CD8-positive, alpha-beta T cell (primary cell): ENCODE measurements at regions of chr10 and their contacts with region 1.

Region 1: GRCh38 chr10:96017191-96017687 is 26.1 kb upstream of the CCNJ start:
- DNase-seq: peak in 5 of 9 experiments; percentile 13 to 71 (median 36)
- ATAC-seq: peak; percentile 81
- H3K4me3 ChIP-seq: no peak overlapping the region
- H3K4me3 Mint-ChIP-seq: no peak overlapping the region
- H3K27ac ChIP-seq: no peak overlapping the region
- H3K27ac Mint-ChIP-seq: no peak overlapping the region
- H3K4me1 ChIP-seq: no peaks in the 10 kb centered on the region
- H3K4me1 Mint-ChIP-seq: no peaks in the 10 kb centered on the region
- H3K27me3 ChIP-seq: no peaks in the 10 kb centered on the region
- H3K27me3 Mint-ChIP-seq: peaks cover 5% of the 10 kb centered on the region
- CTCF ChIP-seq: peak; percentile 63

Region 2: DNA sequence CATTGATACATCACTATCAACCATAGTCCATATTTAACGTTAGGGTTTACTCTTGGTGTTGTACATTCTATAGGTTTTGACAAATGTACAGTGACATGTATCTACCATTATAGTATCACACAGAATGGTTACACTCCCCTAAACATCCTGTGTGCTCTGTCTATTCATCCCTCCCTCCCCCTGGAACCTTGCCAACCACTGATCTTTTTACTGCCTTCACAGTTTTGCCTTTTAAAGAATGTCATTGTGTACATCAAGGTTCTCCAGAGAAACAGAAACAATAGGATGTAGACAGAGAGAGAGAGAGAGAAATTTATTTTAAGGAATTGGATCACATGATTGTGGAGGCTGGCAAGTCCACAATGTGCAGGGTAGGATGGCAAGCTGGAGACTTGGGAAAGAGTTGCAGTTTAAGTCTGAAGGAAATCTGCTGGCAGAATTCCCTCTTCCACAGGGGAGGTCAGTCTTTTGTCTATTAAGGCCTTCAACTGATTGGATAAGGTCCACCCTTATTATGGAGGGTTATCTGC is 18.9 kb before region 1 on chr10:
- CTCF ChIA-PET with region 1: interaction called, 15 read pairs
- POLR2A ChIA-PET with region 1: no interaction called
- intact Hi-C with region 1: no loop called
- DNase-seq: no peak
- ATAC-seq: no peak
- H3K4me3 ChIP-seq: no peak overlapping the region
- H3K4me3 Mint-ChIP-seq: no peak overlapping the region
- H3K27ac ChIP-seq: no peak overlapping the region
- H3K27ac Mint-ChIP-seq: no peak overlapping the region
- H3K4me1 ChIP-seq: no peaks in the 10 kb centered on the region
- H3K4me1 Mint-ChIP-seq: no peaks in the 10 kb centered on the region
- H3K27me3 ChIP-seq: no peaks in the 10 kb centered on the region
- H3K27me3 Mint-ChIP-seq: no peaks in the 10 kb centered on the region
- CTCF ChIP-seq: no peak

Region 3: GRCh38 chr10:96118604-96119450 is 101.6 kb after region 1 on chr10:
- CTCF ChIA-PET with region 1: no interaction called
- POLR2A ChIA-PET with region 1: no interaction called
- intact Hi-C with region 1: no loop called
- DNase-seq: no peak
- ATAC-seq: no peak
- H3K4me3 ChIP-seq: no peak overlapping the region
- H3K4me3 Mint-ChIP-seq: no peak overlapping the region
- H3K27ac ChIP-seq: no peak overlapping the region
- H3K27ac Mint-ChIP-seq: no peak overlapping the region
- H3K4me1 ChIP-seq: no peaks in the 10 kb centered on the region
- H3K4me1 Mint-ChIP-seq: no peaks in the 10 kb centered on the region
- H3K27me3 ChIP-seq: peaks cover 7 to 17% of the 10 kb centered on the region in 2 experiments
- H3K27me3 Mint-ChIP-seq: peaks cover 60% of the 10 kb centered on the region
- CTCF ChIP-seq: no peak

Region 4: GRCh38 chr10:96292971-96293920 is 276.0 kb after region 1 on chr10:
- CTCF ChIA-PET with region 1: interaction called, 32 read pairs
- POLR2A ChIA-PET with region 1: no interaction called
- intact Hi-C with region 1: loop called (anchors 1 to 5 kb)
- DNase-seq: peak in 4 of 9 experiments; percentile 10 to 51 (median 39)
- ATAC-seq: peak; percentile 54
- H3K4me3 ChIP-seq: no peak overlapping the region
- H3K4me3 Mint-ChIP-seq: no peak overlapping the region
- H3K27ac ChIP-seq: no peak overlapping the region
- H3K27ac Mint-ChIP-seq: no peak overlapping the region
- H3K4me1 ChIP-seq: peaks cover 27% of the 10 kb centered on the region
- H3K4me1 Mint-ChIP-seq: peaks cover 28% of the 10 kb centered on the region
- H3K27me3 ChIP-seq: no peaks in the 10 kb centered on the region
- H3K27me3 Mint-ChIP-seq: peaks cover 5% of the 10 kb centered on the region
- CTCF ChIP-seq: peak; percentile 63

Region 5: GRCh38 chr10:96339957-96340904 is 323.0 kb after region 1 on chr10:
- CTCF ChIA-PET with region 1: interaction called, 55 read pairs
- POLR2A ChIA-PET with region 1: interaction called, 3 read pairs
- intact Hi-C with region 1: loop called (anchors 1 kb)
- DNase-seq: peak; percentile 8 to 73 (median 50)
- ATAC-seq: peak; percentile 72
- H3K4me3 ChIP-seq: no peak overlapping the region
- H3K4me3 Mint-ChIP-seq: no peak overlapping the region
- H3K27ac ChIP-seq: no peak overlapping the region
- H3K27ac Mint-ChIP-seq: no peak overlapping the region
- H3K4me1 ChIP-seq: no peaks in the 10 kb centered on the region
- H3K4me1 Mint-ChIP-seq: no peaks in the 10 kb centered on the region
- H3K27me3 ChIP-seq: no peaks in the 10 kb centered on the region
- H3K27me3 Mint-ChIP-seq: no peaks in the 10 kb centered on the region
- CTCF ChIP-seq: peak; percentile 69

Region 6: DNA sequence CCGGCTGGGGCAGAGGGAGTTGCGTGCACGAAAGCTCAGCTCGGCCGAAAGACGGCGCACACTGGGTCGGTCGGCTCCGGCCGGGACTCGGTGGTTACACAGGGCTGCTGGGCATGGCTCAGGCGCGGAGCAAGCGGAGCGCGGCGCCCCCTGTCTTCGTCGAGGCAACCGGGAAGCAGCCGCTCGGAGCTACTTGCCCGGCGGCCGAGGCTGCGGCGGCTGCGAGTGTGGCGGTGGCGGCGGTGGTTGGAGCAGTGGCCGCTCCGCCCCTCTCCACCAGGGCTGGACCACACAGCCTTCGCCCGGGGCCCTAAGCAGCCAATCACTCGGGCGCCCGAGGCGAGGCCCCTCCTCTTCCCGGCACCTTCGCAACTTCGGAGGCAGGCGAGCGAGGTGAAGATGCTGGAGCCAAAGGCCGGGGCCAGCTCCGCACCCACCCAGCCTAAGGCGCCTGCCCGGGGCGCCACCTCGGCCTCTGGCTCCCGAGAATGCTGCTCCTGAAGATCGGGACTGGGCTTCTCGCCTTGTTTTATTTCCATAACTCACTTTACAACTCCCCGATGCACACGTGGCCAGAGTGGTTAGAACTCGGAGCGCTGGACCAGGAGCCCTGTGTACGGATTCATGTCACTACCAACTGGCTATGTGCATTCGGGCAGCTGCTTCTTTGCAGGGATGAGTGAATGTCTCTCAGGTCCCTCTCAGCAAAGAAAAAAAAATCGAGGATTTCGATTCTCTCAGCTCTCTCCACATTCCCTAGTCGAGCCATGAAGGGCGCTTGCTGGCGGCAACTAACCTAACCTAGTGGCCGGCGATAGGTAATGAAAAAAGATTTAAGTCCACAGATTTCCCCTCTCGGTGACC is 496.7 kb after region 1 on chr10 and contains the start of gene TLL2:
- CTCF ChIA-PET with region 1: no interaction called
- POLR2A ChIA-PET with region 1: no interaction called
- intact Hi-C with region 1: loop called in 1 of 2 experiments (anchors 5 kb)
- DNase-seq: peak in 8 of 9 experiments; percentile 20 to 71 (median 44)
- ATAC-seq: peak; percentile 59
- H3K4me3 ChIP-seq: peak within 1 kb of the TSS; percentile 45 to 53
- H3K4me3 Mint-ChIP-seq: peak within 1 kb of the TSS; percentile 81
- H3K27ac ChIP-seq: no peak within 1 kb of the TSS
- H3K27ac Mint-ChIP-seq: no peak within 1 kb of the TSS
- H3K4me1 ChIP-seq: peaks cover 6% of the 10 kb centered on the region
- H3K4me1 Mint-ChIP-seq: peaks cover 16% of the 10 kb centered on the region
- H3K27me3 ChIP-seq: peaks cover 8 to 12% of the 10 kb centered on the region in 2 experiments
- H3K27me3 Mint-ChIP-seq: peaks cover 31% of the 10 kb centered on the region
- CTCF ChIP-seq: no peak
- total RNA-seq, gene TLL2: not detected